Mucosa of descending colon (tissue), 3 donors: ENCODE measurements at regions of chr2 and their contacts with region 1.

Region 1: GRCh38 chr2:55168221-55169154 is 63.6 kb downstream of the CLHC1 start:
- DNase-seq: peak in 1 of 3 donors; percentile 85
- ATAC-seq: peak; percentile 69
- H3K4me3 ChIP-seq: no peak overlapping the region
- H3K4me1 ChIP-seq: peaks cover 16% of the 10 kb centered on the region
- CTCF ChIP-seq: peak; percentile 56

Region 2: DNA sequence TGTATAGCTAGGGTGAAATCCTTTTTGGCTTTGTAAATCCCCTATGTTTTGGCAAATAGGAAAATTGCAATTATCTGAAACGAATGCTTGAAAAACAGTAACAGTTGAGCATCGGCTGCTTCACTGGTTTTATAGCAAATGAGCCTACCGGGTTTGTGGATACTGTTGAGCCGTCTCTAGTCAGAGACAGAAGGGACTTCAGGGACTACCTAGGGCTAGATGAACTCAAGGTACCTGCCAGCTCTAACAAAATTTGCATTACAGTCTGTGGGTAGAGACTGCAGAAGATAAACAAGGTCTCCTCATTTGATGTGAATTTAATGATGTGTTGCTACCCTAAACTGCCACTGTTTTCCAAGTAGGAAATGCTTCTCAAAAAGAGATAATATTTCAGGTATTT is 343.9 kb before region 1 on chr2:
- intact Hi-C with region 1: no loop called
- DNase-seq: no peak
- ATAC-seq: no peak
- H3K4me3 ChIP-seq: no peak overlapping the region
- H3K4me1 ChIP-seq: no peaks in the 10 kb centered on the region
- CTCF ChIP-seq: no peak

Region 3: DNA sequence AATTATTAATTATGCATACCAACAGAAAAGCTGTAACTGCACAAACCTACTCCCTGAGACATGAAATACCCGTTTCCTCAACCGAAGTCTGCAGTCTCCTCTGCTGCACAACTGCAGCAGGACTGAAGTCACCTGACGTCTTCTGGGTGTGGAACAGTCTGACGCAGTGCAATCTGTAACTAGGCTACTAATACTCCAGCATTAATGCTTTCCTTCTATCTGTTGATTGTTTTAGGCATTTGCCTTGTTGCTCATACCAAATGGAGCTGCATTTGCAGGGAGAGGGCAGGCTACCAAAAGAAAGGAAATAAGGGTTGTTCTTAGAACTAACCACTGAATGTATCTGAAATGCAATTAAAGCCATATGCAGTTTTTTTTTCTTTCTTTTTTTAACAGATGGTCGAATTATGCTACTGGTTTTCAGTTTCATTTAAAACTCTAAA is 158.3 kb before region 1 on chr2:
- intact Hi-C with region 1: loop called (anchors 5 to 10 kb)
- DNase-seq: peak; percentile 55 to 84 (median 61)
- ATAC-seq: peak; percentile 91
- H3K4me3 ChIP-seq: no peak overlapping the region
- H3K4me1 ChIP-seq: peaks cover 55% of the 10 kb centered on the region
- CTCF ChIP-seq: no peak

Region 4: GRCh38 chr2:55014962-55015939 is 153.2 kb before region 1 on chr2:
- intact Hi-C with region 1: loop called (anchors 5 to 10 kb)
- DNase-seq: peak in 1 of 3 donors; percentile 84
- ATAC-seq: peak; percentile 87
- H3K4me3 ChIP-seq: no peak overlapping the region
- H3K4me1 ChIP-seq: peaks cover 41% of the 10 kb centered on the region
- CTCF ChIP-seq: peak; percentile 25